ENCODE measurements at regions of chr11 and their contacts with region 1.

Region 1: DNA sequence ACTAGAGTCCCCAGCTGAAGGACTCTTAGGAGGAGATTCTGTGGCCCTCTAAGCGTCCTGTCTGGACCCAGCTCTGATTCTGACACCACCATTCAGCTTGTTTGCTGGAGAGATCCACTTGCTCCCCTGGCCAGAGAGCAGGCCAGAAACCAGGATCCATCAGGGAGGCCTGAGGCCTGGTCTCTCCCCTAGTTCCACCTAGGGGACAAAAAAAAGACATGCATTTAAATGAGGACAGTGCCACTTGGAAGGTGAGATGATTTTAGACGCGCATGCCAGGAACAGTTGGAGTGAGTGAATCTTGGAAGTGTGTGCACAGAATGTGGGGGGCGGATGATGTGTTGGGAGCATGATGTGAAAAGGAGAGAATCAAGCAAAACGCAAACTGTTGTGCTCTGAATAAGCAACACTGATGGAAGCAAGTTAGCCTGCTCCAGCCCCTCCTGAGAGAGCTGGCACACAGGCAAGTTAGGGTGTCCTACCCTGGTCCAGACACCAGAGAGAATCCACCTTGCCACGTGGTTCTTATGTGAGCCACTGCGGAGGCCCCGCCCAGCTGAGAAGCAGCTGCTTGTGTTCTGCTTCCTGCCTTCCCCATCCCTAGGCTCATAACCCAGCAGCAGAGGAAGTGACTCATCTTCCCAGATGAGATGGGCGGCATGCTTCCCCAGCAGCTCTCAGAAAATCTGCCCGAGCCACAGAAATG is 8.0 kb upstream of the SLCO2B1 start:
- DNase-seq: peak; percentile 73
- H3K4me3 ChIP-seq: no peak overlapping the region
- H3K27me3 ChIP-seq: peaks cover 8% of the 10 kb centered on the region
- CTCF ChIP-seq: no peak

Region 2: DNA sequence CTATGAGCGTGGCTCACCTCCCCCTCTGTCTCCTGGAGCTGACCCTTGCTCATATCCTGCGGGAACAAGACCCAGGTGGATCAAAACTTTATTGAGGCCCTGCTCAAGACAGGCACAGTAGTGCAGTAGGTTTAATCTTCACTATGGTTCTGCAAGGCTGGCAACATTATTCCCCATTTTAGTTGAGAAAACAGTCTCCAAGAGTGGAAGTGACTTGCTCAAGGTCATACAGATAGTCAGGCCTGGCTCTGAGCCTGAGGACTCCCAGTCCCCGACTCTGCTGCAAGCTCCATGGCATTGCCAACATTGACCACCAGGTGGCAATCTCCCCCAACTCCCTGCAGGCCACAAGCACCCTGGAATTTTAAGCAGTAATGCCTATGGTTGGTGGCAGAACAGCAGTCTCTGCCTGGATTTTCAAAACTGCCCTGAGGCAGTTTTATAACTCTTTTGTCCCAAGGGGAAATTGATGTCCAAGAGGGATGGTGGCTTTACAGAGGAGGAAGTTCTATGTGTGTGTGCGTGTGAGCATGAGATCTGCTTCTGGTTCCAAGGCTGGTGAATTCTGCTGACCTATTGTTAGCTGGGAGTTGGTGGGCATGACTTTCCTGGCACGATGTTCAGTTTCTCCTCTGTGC is 120.0 kb before region 1 on chr11:
- CTCF ChIA-PET with region 1: interaction called, 27 read pairs
- POLR2A ChIA-PET with region 1: no interaction called
- DNase-seq: peak; percentile 16
- H3K4me3 ChIP-seq: no peak overlapping the region
- H3K27me3 ChIP-seq: no peaks in the 10 kb centered on the region
- CTCF ChIP-seq: peak; percentile 97

Region 3: DNA sequence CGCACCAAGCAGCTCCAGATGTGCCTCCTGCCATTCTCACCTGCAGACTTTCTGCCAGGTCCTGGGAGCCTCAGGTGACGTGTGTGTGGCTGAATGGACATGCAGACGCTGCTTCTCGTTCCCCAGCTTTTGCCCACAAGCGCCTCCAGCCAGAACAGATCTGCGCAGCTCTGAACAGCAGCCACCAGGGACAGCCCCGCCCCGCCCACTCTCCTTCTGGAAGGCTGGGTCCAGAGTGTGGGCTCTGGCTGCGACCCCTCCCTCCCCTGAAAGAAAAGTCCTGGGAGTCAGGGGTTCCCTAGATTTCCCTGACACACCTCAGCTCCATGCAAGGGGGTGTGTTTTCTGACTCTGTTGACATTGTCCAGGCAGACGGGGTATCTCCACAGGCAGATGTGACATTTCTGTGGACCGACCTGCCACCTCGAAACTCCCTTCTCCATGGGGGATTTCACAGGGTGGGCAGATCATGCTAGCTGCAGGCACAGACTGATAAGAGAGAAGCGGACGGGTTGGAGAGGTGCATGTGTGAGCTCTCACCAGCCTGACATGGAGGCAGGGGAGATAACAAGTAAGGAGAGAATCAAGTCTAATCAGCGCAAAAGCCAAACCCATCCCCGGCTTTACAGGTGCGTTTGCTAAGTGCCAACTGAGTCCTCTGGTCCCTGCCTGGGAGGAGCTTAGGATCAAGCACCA is 27.8 kb after region 1 on chr11:
- CTCF ChIA-PET with region 1: interaction called, 13 read pairs
- POLR2A ChIA-PET with region 1: no interaction called
- DNase-seq: no peak
- H3K4me3 ChIP-seq: no peak overlapping the region
- H3K27me3 ChIP-seq: peaks cover 9% of the 10 kb centered on the region; the same call in 1 of the 2 replicates
- CTCF ChIP-seq: no peak

Region 4: DNA sequence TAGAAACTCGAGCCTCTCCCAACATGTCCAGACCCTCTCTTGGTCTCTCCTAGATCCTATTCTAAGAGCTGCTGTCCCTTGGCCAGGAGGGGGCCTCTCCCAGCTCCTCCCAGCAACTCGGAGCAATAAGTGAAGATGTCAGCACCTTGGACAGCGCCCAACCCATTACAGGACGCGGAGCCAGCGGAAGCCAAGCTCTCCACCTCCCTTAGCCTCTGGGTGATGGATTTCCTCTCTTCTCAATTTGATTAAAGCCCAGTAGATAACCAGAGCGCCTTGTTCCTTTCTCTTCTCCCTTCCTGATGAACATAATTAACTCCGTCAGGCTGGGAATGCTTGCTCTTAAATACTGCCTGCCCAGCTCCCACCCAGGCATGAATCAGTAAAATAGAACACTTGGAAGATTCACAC is 71.5 kb after region 1 on chr11:
- CTCF ChIA-PET with region 1: interaction called, 309 read pairs
- POLR2A ChIA-PET with region 1: no interaction called
- DNase-seq: no peak
- H3K4me3 ChIP-seq: no peak overlapping the region
- H3K27me3 ChIP-seq: peaks cover 3% of the 10 kb centered on the region
- CTCF ChIP-seq: peak; percentile 51

Region 5: DNA sequence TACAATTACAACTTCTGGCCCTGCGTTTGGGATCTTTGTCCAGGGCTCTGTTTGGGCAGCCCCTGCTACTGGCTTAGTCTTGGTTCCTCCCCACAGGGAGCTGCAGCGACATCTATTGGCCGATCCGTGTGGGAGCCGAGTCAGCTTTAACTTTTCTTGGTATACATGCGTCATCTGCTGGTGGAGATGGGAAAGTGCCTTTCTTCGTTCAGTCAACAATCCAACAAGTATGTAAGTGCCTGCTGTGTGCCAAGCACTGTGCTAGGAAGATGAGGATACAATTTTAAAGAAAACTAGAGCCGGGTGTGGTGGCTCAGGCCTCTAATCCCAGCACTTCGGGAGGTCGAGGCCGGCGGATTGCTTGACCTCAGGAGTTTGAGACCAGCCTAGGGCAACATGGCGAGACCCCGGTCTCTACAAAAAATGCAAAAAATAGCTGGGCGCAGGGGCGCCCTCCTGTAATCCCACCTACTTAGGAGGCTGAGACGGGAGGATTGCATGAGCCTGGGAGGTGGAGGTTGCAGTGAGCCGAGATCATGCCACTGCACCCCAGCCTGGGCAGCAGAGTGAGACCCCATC is 105.9 kb after region 1 on chr11:
- CTCF ChIA-PET with region 1: interaction called, 166 read pairs
- POLR2A ChIA-PET with region 1: no interaction called
- DNase-seq: peak; percentile 37
- H3K4me3 ChIP-seq: no peak overlapping the region
- H3K27me3 ChIP-seq: peaks cover 17% of the 10 kb centered on the region
- CTCF ChIP-seq: peak; percentile 100

Measured in BJ (cell line).